Activated CD8-positive, alpha-beta T cell treated with anti-CD3 and anti-CD28 coated beads for 36 hours (primary cell): ENCODE measurements at regions of chr14 and their contacts with region 1.

Region 1: GRCh38 chr14:99899578-99900178 is 106.5 kb downstream of the EML1 start:
- DNase-seq: no peak
- ATAC-seq: no peak
- H3K4me3 Mint-ChIP-seq: no peak overlapping the region
- H3K27ac Mint-ChIP-seq: no peak overlapping the region
- H3K4me1 Mint-ChIP-seq: no peaks in the 10 kb centered on the region
- H3K27me3 Mint-ChIP-seq: peaks cover 1% of the 10 kb centered on the region
- CTCF ChIP-seq: peak; percentile 46

Region 2: GRCh38 chr14:99729991-99730868 is 169.4 kb before region 1 on chr14:
- CTCF ChIA-PET with region 1: interaction called, 10 read pairs
- POLR2A ChIA-PET with region 1: no interaction called
- intact Hi-C with region 1: no loop called
- DNase-seq: peak; percentile 79
- ATAC-seq: peak; percentile 96
- H3K4me3 Mint-ChIP-seq: no peak overlapping the region
- H3K27ac Mint-ChIP-seq: no peak overlapping the region
- H3K4me1 Mint-ChIP-seq: no peaks in the 10 kb centered on the region
- H3K27me3 Mint-ChIP-seq: peaks cover 25% of the 10 kb centered on the region
- CTCF ChIP-seq: peak; percentile 95

Region 3: GRCh38 chr14:99910337-99911309 is 10.9 kb after region 1 on chr14:
- CTCF ChIA-PET with region 1: interaction called, 12 read pairs
- POLR2A ChIA-PET with region 1: no interaction called
- intact Hi-C with region 1: no loop called
- DNase-seq: no peak
- ATAC-seq: no peak
- H3K4me3 Mint-ChIP-seq: no peak overlapping the region
- H3K27ac Mint-ChIP-seq: no peak overlapping the region
- H3K4me1 Mint-ChIP-seq: no peaks in the 10 kb centered on the region
- H3K27me3 Mint-ChIP-seq: peaks cover 16% of the 10 kb centered on the region
- CTCF ChIP-seq: no peak

Region 4: GRCh38 chr14:99936747-99937474 is 37.2 kb after region 1 on chr14:
- CTCF ChIA-PET with region 1: no interaction called
- POLR2A ChIA-PET with region 1: no interaction called
- intact Hi-C with region 1: no loop called
- DNase-seq: no peak
- ATAC-seq: no peak
- H3K4me3 Mint-ChIP-seq: no peak overlapping the region
- H3K27ac Mint-ChIP-seq: no peak overlapping the region
- H3K4me1 Mint-ChIP-seq: no peaks in the 10 kb centered on the region
- H3K27me3 Mint-ChIP-seq: no peaks in the 10 kb centered on the region
- CTCF ChIP-seq: no peak